Prostate gland (tissue), 2 donors: ENCODE measurements at regions of chr2 and their contacts with region 1.

Region 1: GRCh38 chr2:233443468-233444183 is 89.3 kb downstream of the DGKD start:
- DNase-seq: peak; percentile 84
- H3K4me3 ChIP-seq: no peak overlapping the region
- H3K27ac ChIP-seq: peak overlapping the region; percentile 11 to 39
- H3K4me1 ChIP-seq: no peaks in the 10 kb centered on the region
- H3K27me3 ChIP-seq: no peaks in the 10 kb centered on the region
- CTCF ChIP-seq: peak; percentile 70 to 93 (median 89)
- POLR2A ChIP-seq: no peak

Region 2: DNA sequence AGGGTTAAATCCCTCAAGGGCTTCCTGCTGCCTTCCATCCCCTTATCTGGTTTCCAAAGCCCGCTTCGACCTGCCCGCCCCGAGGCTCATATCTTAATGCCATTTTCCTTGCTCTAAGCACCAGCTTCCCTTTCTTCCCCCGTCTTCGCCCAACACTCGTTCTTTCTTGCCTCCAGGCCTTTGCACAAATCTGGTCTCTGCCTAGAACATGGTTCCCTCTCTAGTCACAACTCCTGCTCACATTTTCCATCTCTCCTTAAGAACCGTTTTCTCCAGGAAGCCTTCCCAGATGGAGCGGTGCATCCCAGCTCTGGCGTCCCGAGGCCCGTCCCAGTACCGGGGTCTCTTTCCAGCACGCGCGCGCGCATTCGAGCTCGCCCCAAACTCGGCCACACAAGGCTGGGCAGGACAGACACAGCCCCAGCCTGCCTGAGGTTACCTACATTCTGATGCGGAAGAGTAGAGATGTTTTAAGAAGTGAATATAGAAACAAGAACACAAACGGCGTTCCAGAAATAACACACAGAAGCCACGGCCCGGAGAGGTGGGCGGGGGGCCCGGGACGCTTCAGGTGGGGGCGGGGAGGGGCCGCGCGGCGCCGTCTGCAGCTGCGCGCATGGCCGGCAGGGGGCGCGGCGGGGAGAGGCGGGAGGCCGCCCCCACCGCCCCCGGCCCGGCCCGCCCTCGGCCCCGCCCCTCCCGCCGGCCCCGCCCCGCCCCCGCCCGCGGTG is 89.7 kb before region 1 on chr2 and contains the start of gene DGKD:
- intact Hi-C with region 1: loop called (anchors 2 kb)
- DNase-seq: peak; percentile 38
- H3K4me3 ChIP-seq: peak within 1 kb of the TSS; percentile 68
- H3K27ac ChIP-seq: peak within 1 kb of the TSS; percentile 62 to 85
- H3K4me1 ChIP-seq: no peaks in the 10 kb centered on the region
- H3K27me3 ChIP-seq: no peaks in the 10 kb centered on the region
- CTCF ChIP-seq: peak in 3 of 4 experiments; percentile 20 to 63 (median 59)
- POLR2A ChIP-seq: no peak
- total RNA-seq, gene DGKD: 21.5 to 63.1 TPM

Region 3: DNA sequence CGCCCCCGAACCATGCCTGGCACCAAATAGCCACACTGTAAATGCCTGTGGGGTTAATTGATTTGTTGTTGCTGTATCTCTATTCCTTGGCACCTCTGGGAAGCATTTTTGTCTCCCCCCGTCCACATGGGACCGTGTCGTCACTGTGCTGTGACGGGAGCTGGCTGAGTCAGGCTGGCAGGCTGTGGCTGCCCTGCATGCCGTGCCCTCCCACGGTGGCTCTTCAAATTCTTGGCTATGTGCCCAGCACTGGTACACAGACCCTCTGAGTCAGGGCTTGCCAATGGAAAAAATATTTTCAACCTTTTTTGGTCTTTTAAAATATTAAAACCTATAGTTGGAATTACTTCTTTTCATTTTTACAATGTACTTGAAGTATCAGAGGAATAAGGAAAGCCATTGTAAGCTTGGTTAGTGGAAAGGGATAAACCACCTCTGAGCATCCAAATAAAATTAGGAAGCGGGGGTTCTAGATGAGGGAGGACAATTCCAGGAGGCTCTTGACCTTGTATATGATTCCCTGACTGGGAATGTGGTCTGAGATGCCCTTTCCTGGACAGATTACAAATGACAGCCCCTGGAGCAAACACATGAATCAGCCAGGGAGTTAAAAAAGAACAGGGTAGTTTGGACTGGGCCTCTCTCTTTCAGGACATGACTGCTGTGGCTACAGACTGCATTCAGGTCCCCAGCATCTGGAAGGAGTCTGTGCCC is 29.9 kb before region 1 on chr2:
- intact Hi-C with region 1: no loop called
- DNase-seq: no peak
- H3K4me3 ChIP-seq: no peak overlapping the region
- H3K27ac ChIP-seq: peak overlapping the region in 1 of 2 donors; percentile 12
- H3K4me1 ChIP-seq: peaks cover 7% of the 10 kb centered on the region
- H3K27me3 ChIP-seq: no peaks in the 10 kb centered on the region
- CTCF ChIP-seq: no peak
- POLR2A ChIP-seq: no peak

Region 4: DNA sequence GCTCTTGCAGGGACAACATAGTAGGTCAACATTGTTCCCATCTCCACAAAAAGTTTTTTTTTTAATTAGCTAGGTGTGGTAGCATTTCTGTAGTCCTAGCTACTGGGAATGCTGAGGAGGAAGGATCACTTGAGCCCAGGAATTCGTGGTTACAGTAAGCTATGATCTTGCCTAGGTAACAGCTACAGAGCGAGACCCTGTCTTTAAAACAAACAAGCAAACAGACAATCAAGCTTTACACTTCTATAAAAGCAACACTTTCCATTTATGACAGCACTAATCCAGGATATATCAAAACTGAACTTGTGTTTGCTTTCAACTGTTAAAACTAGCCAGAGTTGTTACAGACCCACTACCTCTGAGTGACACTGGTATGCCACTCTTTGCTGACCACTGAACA is 297.2 kb after region 1 on chr2:
- intact Hi-C with region 1: no loop called
- DNase-seq: no peak
- H3K4me3 ChIP-seq: no peak overlapping the region
- H3K27ac ChIP-seq: no peak overlapping the region
- H3K4me1 ChIP-seq: no peaks in the 10 kb centered on the region
- H3K27me3 ChIP-seq: no peaks in the 10 kb centered on the region
- CTCF ChIP-seq: no peak
- POLR2A ChIP-seq: no peak

Region 5: GRCh38 chr2:234437642-234438304 is 994.1 kb after region 1 on chr2:
- intact Hi-C with region 1: no loop called
- DNase-seq: peak; percentile 71
- H3K4me3 ChIP-seq: no peak overlapping the region
- H3K27ac ChIP-seq: peak overlapping the region; percentile 39 to 51
- H3K4me1 ChIP-seq: no peaks in the 10 kb centered on the region
- H3K27me3 ChIP-seq: no peaks in the 10 kb centered on the region
- CTCF ChIP-seq: no peak
- POLR2A ChIP-seq: no peak